Activated CD8-positive, alpha-beta T cell treated with anti-CD3 and anti-CD28 coated beads, Interleukin-2, amount 10 ng/mL, durations not matched to agents 7 days and 5 days (primary cell): ENCODE measurements at regions of chr2 and their contacts with region 1.

Region 1: GRCh38 chr2:28594289-28595108 is 98.6 kb downstream of the PLB1 start:
- DNase-seq: peak; percentile 89
- ATAC-seq: peak; percentile 86
- H3K4me3 Mint-ChIP-seq: no peak overlapping the region
- H3K27ac Mint-ChIP-seq: peak overlapping the region; percentile 60
- H3K4me1 Mint-ChIP-seq: peaks cover 28% of the 10 kb centered on the region
- H3K27me3 Mint-ChIP-seq: no peaks in the 10 kb centered on the region

Region 2: DNA sequence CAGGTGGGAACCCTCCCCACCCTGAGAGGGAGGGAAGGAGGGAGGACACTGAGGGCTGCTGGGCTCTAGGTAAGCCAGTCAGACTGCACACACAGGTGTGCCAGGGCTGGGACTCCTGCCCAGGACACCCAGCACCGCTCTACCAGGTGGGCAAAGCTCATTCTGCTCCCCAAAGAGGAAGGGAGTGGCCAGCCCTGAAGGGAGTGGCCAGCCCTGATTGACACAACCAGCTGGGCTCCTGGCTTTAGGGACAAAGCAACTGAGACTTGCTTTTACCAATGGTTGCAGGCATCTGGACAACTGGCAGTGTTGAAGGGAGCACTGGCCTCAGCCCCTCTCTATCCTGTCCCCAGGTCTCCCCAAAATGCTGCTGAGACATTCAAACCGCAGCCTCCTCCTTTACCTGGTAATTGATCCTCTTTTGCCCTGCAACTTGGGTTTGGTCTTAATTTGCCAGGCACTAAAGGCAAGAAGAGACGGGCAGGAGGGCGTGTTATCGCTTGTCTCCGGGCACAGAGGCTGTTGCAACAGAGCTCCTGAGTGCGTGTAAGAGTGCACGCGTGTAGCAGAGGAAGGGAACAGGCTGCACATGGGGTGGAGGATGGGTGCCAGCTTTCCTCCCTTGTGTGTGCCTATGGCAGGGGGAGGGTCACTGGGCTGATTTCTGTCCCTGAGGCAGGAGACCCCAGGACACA is 216.4 kb before region 1 on chr2:
- CTCF ChIA-PET with region 1: no interaction called
- POLR2A ChIA-PET with region 1: no interaction called
- DNase-seq: no peak
- ATAC-seq: peak; percentile 17
- H3K4me3 Mint-ChIP-seq: no peak overlapping the region
- H3K27ac Mint-ChIP-seq: peak overlapping the region; percentile 37
- H3K4me1 Mint-ChIP-seq: peaks cover 47% of the 10 kb centered on the region
- H3K27me3 Mint-ChIP-seq: peaks cover 3% of the 10 kb centered on the region

Region 3: GRCh38 chr2:28437151-28437811 is 157.2 kb before region 1 on chr2:
- CTCF ChIA-PET with region 1: no interaction called
- POLR2A ChIA-PET with region 1: no interaction called
- DNase-seq: no peak
- ATAC-seq: no peak
- H3K4me3 Mint-ChIP-seq: no peak overlapping the region
- H3K27ac Mint-ChIP-seq: no peak overlapping the region
- H3K4me1 Mint-ChIP-seq: peaks cover 50% of the 10 kb centered on the region
- H3K27me3 Mint-ChIP-seq: no peaks in the 10 kb centered on the region

Region 4: GRCh38 chr2:28507806-28508764 is 86.4 kb before region 1 on chr2:
- CTCF ChIA-PET with region 1: no interaction called
- POLR2A ChIA-PET with region 1: no interaction called
- DNase-seq: peak; percentile 74
- ATAC-seq: peak; percentile 98
- H3K4me3 Mint-ChIP-seq: no peak overlapping the region
- H3K27ac Mint-ChIP-seq: peak overlapping the region; percentile 71
- H3K4me1 Mint-ChIP-seq: peaks cover 23% of the 10 kb centered on the region
- H3K27me3 Mint-ChIP-seq: peaks cover 35% of the 10 kb centered on the region

Region 5: GRCh38 chr2:28566521-28567041 is 27.9 kb before region 1 on chr2:
- CTCF ChIA-PET with region 1: interaction called, 62 read pairs
- POLR2A ChIA-PET with region 1: interaction called, 4 read pairs
- DNase-seq: peak; percentile 92
- ATAC-seq: peak; percentile 98
- H3K4me3 Mint-ChIP-seq: peak overlapping the region; percentile 85
- H3K27ac Mint-ChIP-seq: peak overlapping the region; percentile 87
- H3K4me1 Mint-ChIP-seq: peaks cover 29% of the 10 kb centered on the region
- H3K27me3 Mint-ChIP-seq: peaks cover 8% of the 10 kb centered on the region

Region 6: GRCh38 chr2:28583899-28584553 is 10.5 kb before region 1 on chr2:
- CTCF ChIA-PET with region 1: interaction called, 32 read pairs
- POLR2A ChIA-PET with region 1: interaction called, 3 read pairs
- DNase-seq: peak; percentile 62
- ATAC-seq: peak; percentile 33
- H3K4me3 Mint-ChIP-seq: no peak overlapping the region
- H3K27ac Mint-ChIP-seq: no peak overlapping the region
- H3K4me1 Mint-ChIP-seq: peaks cover 61% of the 10 kb centered on the region
- H3K27me3 Mint-ChIP-seq: no peaks in the 10 kb centered on the region

Region 7: DNA sequence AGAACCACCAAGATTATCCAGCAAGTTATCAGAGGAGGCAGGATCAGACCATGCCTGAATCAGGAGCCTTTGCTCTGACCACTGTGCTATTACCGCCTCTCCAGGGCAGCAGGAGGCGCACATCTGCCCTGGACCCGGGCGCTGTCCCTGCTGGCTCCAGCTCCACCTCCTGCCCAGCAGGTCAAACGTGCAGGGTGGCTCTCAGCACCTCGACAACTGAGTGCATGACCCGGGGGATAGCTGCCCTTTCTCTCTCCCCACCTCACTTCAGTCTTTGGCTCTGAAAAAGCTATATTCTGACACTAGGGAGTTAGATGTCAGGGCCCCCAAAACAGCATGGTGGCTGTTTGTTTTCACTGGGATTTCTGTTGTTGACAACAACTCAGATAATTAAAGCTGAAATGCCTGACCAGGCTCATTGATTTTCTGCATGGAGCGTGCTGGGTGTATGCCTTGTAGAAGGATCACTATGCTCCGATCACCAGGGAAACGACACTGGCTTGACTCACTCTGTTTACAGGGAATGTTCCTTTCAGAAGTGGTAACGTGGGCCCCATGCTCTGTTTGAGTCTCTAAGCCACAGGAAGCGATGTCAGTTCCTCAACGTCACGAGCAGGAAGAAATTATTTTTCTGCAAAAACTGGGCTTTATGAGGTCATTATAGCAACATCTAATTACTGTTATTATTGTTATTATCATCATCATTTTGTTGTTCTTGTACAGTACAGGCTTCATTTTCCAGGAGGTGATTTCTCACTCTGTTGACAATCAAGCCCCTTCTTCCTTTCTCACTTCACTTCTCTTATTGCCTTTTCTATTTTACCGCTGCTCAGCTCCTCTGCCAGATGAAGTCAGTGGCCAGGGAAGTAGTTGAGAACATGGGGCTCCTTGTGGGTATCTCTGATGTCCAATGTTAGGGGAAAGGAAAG is 26.9 kb after region 1 on chr2:
- CTCF ChIA-PET with region 1: interaction called, 211 read pairs
- POLR2A ChIA-PET with region 1: interaction called, 3 read pairs
- DNase-seq: peak; percentile 79
- ATAC-seq: peak; percentile 84
- H3K4me3 Mint-ChIP-seq: peak overlapping the region; percentile 64
- H3K27ac Mint-ChIP-seq: peak overlapping the region; percentile 94
- H3K4me1 Mint-ChIP-seq: peaks cover 95% of the 10 kb centered on the region
- H3K27me3 Mint-ChIP-seq: no peaks in the 10 kb centered on the region

Region 8: DNA sequence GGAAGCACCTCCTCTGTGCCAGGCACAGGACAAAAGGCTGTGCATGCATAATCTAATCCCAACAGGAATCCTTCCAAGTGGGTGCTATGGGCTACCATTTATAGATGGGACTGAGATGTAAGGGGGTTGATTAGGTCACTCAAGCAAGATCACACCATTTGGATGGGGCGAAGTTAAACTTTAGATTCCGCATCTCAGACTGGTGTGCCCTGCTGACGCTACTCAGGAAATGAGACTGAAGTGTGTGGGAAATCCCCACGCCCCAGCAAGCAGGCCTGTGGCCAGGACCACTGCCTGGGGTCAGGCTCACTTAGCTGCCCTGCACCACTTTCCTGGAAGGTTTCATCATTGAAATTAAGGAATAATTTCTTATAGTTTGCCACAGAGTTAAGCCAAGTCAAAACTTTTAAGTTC is 86.7 kb after region 1 on chr2:
- CTCF ChIA-PET with region 1: interaction called, 23 read pairs
- POLR2A ChIA-PET with region 1: no interaction called
- DNase-seq: peak; percentile 67
- ATAC-seq: peak; percentile 96
- H3K4me3 Mint-ChIP-seq: peak overlapping the region; percentile 17
- H3K27ac Mint-ChIP-seq: peak overlapping the region; percentile 64
- H3K4me1 Mint-ChIP-seq: peaks cover 29% of the 10 kb centered on the region
- H3K27me3 Mint-ChIP-seq: no peaks in the 10 kb centered on the region

Region 9: GRCh38 chr2:28751252-28751955 is 156.9 kb after region 1 on chr2 and contains the start of gene PPP1CB:
- CTCF ChIA-PET with region 1: interaction called, 224 read pairs
- POLR2A ChIA-PET with region 1: interaction called, 8 read pairs
- DNase-seq: peak; percentile 95
- ATAC-seq: peak; percentile 86
- H3K4me3 Mint-ChIP-seq: peak within 1 kb of the TSS; percentile 87
- H3K27ac Mint-ChIP-seq: peak within 1 kb of the TSS; percentile 97
- H3K4me1 Mint-ChIP-seq: peaks cover 50% of the 10 kb centered on the region
- H3K27me3 Mint-ChIP-seq: no peaks in the 10 kb centered on the region
- total RNA-seq, gene PPP1CB: 174 to 183 TPM

Region 10: DNA sequence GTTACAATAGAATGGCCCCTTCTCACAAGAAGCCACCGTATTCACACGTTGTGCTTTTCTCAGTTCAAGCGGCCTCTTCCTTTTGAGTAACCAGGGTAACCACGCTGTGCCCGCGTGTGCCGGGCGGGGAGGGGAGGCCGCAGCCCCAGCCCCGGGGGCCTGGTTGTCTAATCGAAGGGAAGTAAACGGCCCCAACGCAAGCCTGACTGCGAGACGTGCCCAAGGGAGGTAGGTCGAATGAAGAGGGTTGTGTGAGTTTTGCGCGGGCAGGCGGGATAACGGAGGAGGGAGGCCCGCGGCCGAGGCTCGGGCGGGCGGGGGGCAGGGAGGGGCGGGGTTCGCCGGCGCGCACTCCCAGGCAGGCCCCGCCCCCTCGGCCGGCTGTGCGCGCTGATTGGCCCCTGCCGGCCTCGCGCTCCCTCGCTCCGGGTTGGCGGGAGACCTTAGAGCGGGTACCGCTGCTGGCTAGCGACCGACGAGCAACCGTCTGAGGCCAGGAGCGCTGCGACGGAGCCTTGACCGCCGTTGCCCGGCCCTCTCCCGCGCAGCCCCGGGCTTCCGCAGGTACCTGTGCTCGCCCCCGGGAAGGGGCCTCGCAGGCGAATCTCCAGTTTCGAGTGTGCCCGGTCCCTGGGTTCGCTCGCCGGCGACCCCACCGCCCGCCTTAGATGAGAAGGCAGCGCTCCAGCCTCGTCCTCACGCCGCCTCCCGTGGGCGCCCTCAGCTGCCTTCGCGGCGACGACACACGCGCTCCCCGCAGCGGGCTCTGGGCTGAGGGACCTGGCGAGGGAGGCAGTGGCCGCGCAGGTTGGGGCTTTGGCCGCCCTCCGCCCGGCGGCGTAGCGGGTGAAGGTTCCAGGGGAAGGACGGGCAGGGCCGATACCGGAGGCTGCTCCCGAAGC is 216.1 kb after region 1 on chr2 and contains the start of gene SPDYA:
- CTCF ChIA-PET with region 1: interaction called, 18 read pairs
- POLR2A ChIA-PET with region 1: no interaction called
- DNase-seq: peak; percentile 84
- ATAC-seq: peak; percentile 96
- H3K4me3 Mint-ChIP-seq: peak within 1 kb of the TSS; percentile 73
- H3K27ac Mint-ChIP-seq: peak within 1 kb of the TSS; percentile 67
- H3K4me1 Mint-ChIP-seq: peaks cover 16% of the 10 kb centered on the region
- H3K27me3 Mint-ChIP-seq: peaks cover 2% of the 10 kb centered on the region
- total RNA-seq, gene SPDYA: 1.2 TPM

Region 11: DNA sequence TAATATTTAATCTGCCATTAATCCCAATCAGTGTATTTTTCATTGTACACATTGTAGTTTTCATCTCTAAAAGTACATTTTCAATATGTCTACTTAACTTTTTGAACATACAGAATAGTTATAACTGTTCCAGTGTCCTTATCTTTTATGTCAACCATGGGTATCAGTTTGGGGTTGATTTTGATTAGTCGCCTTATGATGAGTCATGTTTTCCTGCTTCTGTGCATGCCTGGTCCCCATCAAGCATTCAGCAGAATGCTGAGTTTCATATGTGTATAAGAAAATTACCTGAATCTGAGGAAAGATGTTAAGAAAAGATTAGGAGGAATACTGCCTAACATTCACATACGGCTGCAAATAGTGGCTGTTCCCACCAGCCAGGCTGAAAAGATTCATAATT is 233.9 kb after region 1 on chr2:
- CTCF ChIA-PET with region 1: no interaction called
- POLR2A ChIA-PET with region 1: no interaction called
- DNase-seq: no peak
- ATAC-seq: no peak
- H3K4me3 Mint-ChIP-seq: no peak overlapping the region
- H3K27ac Mint-ChIP-seq: no peak overlapping the region
- H3K4me1 Mint-ChIP-seq: no peaks in the 10 kb centered on the region
- H3K27me3 Mint-ChIP-seq: no peaks in the 10 kb centered on the region